Naive thymus-derived CD4-positive, alpha-beta T cell (primary cell): ENCODE measurements at regions of chr16 and their contacts with region 1.

Region 1: DNA sequence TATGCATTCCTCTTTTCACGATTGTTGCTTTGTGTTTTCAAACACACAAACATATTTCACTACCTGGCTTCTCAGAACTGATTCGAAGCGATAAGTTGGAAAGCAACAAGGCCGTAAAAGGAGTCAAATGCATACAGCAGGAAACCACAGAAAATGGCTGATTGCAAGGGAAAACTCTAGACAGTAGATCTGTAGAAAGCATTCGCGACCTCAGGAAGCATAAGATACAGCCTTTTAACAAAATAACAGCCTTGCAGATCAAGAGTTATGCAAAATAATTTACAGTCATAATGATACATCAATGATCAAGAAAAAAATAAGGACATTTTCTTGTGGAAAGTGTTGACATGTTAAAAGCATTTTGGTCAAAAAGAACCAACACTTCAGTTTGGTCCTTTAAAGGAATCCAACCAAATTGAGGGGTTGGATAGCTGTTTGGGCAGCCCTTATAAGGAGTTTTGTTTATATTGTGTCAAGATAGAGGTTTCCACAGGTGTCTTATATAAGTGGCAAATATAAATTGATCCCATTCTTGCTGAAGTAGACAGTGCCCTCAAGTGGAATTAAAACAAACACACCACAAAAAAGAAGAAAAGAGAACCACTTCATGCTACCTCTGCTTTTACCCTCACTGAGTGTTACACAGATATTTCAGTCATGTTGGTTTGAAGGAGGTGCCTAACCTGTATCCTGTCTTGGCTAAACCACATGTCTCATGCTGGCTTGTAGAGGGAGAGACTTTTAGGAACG is 5.5 kb downstream of the CYLD start:
- DNase-seq: peak in 7 of 9 donors; percentile 52 to 80 (median 73)
- ATAC-seq: peak; percentile 87
- H3K4me3 ChIP-seq: peak overlapping the region; percentile 33
- H3K4me3 Mint-ChIP-seq: peak overlapping the region; percentile 74 to 99 (median 94)
- H3K27ac ChIP-seq: peak overlapping the region; percentile 100
- H3K27ac Mint-ChIP-seq: peak overlapping the region; percentile 85 to 98 (median 93)
- H3K4me1 ChIP-seq: peaks cover 30 to 66% of the 10 kb centered on the region in 2 donors
- H3K4me1 Mint-ChIP-seq: peaks cover 34 to 78% (median 69%) of the 10 kb centered on the region in 7 donors
- H3K27me3 ChIP-seq: no peaks in the 10 kb centered on the region
- H3K27me3 Mint-ChIP-seq: no peaks in the 10 kb centered on the region

Region 2: DNA sequence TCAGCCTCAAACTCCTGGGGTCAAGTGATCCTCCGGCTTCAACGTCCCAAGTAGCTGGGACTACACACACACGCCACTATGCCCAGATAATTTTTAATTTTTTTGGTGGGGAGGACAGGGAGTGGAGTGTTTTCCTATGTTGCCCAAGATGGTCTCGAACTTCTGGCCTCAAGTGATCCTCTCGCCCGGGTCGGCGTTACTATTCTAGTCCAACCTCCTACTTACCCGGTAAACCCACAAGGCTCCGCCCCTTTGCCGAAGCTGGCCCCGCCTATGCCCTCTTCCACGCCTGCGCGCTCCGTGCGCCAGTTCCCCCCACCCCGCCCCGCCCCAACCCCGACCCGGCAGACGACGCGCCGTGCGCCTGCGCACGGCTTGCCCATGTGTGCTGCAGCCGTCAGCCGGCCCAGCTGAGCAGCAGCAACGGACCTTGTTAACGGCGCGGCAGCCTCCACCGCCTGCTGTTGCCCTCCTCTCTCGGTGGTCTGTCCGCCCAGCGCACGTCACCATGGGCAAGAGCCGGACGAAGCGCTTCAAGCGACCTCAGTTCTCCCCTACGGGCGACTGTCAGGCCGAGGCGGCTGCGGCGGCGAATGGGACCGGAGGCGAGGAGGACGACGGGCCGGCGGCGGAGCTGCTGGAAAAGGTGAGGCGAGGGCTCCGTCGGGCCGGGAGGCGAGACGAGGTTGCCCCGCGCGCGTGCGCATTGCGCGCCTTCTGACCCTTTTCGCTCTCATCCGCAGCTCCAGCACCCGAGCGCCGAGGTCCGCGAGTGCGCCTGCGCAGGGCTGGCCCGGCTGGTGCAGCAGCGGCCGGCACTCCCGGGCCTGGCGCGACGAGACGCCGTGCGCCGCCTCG is 681.5 kb before region 1 on chr16 and contains the start of gene HEATR3:
- CTCF ChIA-PET with region 1: no interaction called
- POLR2A ChIA-PET with region 1: no interaction called
- intact Hi-C with region 1: loop called in 1 of 2 experiments (anchors 5 kb)
- DNase-seq: peak; percentile 86 to 96 (median 90)
- ATAC-seq: peak; percentile 93
- H3K4me3 ChIP-seq: peak within 1 kb of the TSS; percentile 91
- H3K4me3 Mint-ChIP-seq: peak within 1 kb of the TSS; percentile 80 to 97 (median 92)
- H3K27ac ChIP-seq: peak within 1 kb of the TSS; percentile 81
- H3K27ac Mint-ChIP-seq: peak within 1 kb of the TSS; percentile 55 to 96 (median 93)
- H3K4me1 ChIP-seq: peaks cover 17 to 18% of the 10 kb centered on the region in 2 donors
- H3K4me1 Mint-ChIP-seq: peaks cover 34 to 49% (median 44%) of the 10 kb centered on the region in 7 donors
- H3K27me3 ChIP-seq: no peaks in the 10 kb centered on the region
- H3K27me3 Mint-ChIP-seq: no peaks in the 10 kb centered on the region
- total RNA-seq, gene HEATR3: 12.5 to 27.5 (median 23.5) TPM

Region 3: DNA sequence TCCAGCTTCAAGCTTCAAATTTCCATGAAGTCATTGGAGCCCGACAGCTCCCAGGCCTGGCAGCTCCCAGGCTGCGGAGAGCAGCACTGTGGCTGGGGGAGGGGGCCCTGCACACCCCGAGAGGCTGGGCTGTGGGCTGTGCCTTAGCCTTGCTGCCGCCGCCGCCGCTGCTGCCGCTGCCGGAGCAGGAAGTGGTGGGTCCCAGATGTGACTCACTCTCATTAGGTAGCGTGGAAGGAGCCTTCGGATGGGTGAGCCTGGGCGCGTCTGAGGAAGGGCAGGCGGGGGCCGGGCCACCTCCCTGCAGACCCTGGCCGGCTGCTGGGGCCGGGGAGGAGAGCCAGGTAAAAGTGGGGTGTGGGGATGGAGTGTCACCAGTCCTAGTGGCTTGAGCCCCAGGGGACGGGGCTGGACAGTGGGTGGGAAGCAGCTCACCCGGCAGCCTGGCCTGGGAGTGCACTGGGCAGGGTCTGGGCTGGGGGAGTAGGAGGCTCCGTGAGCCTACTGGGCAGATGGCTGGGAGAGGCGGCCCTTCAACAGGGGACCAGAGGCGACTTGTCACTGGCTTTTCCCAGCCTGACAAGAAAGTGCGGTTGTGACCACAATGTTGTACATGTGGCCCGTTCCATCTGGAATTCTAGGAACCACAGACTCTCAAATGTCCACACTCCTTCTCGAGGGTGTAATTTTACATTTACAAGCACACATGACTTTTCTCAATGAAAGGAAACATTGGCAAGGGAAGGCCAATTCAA is 480.9 kb before region 1 on chr16 and contains the start of gene ADCY7:
- CTCF ChIA-PET with region 1: interaction called, 5 read pairs
- POLR2A ChIA-PET with region 1: interaction called, 3 read pairs
- intact Hi-C with region 1: loop called (anchors 2 to 5 kb)
- DNase-seq: peak; percentile 57 to 84 (median 77)
- ATAC-seq: peak; percentile 90
- H3K4me3 ChIP-seq: peak within 1 kb of the TSS; percentile 87
- H3K4me3 Mint-ChIP-seq: peak within 1 kb of the TSS; percentile 83 to 98 (median 96)
- H3K27ac ChIP-seq: peak within 1 kb of the TSS; percentile 85
- H3K27ac Mint-ChIP-seq: peak within 1 kb of the TSS; percentile 77 to 99 (median 97)
- H3K4me1 ChIP-seq: peaks cover 41 to 46% of the 10 kb centered on the region in 2 donors
- H3K4me1 Mint-ChIP-seq: peaks cover 56 to 76% (median 60%) of the 10 kb centered on the region in 7 donors
- H3K27me3 ChIP-seq: no peaks in the 10 kb centered on the region
- H3K27me3 Mint-ChIP-seq: no peaks in the 10 kb centered on the region
- total RNA-seq, gene ADCY7: 179 to 326 (median 208) TPM

Region 4: GRCh38 chr16:50530277-50531236 is 216.8 kb before region 1 on chr16:
- CTCF ChIA-PET with region 1: no interaction called
- POLR2A ChIA-PET with region 1: no interaction called
- intact Hi-C with region 1: no loop called
- DNase-seq: no peak
- ATAC-seq: no peak
- H3K4me3 ChIP-seq: no peak overlapping the region
- H3K4me3 Mint-ChIP-seq: no peak overlapping the region
- H3K27ac ChIP-seq: no peak overlapping the region
- H3K27ac Mint-ChIP-seq: no peak overlapping the region
- H3K4me1 ChIP-seq: no peaks in the 10 kb centered on the region
- H3K4me1 Mint-ChIP-seq: peaks cover 0 to 3% (median 0%) of the 10 kb centered on the region in 7 donors
- H3K27me3 ChIP-seq: no peaks in the 10 kb centered on the region
- H3K27me3 Mint-ChIP-seq: peaks cover 0 to 18% (median 0%) of the 10 kb centered on the region in 5 donors

Region 5: DNA sequence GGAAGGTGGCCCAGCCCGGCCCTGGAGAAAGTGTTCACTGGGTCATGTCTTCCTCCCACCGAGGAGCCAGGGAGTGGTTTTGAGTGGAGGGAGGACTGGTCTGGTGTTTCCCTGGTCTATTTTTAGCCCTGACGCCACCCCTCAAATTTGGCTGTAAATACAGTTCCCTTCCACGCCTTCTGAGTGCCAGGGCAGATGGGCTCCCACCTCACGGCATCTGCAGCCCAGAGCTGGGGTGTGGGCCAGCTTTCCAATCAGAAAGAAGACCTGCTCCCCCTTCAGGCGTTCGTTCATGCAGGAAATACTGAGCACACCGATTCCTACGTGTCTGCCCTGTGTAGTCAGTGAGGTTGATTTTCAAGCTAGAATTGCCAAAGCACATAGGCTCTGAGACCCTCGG is 120.0 kb before region 1 on chr16:
- CTCF ChIA-PET with region 1: interaction called, 5 read pairs
- POLR2A ChIA-PET with region 1: interaction called, 3 read pairs
- intact Hi-C with region 1: loop called in 1 of 2 experiments (anchors 1 kb)
- DNase-seq: peak in 7 of 9 donors; percentile 29 to 67 (median 57)
- ATAC-seq: peak; percentile 78
- H3K4me3 ChIP-seq: peak overlapping the region; percentile 29
- H3K4me3 Mint-ChIP-seq: peak overlapping the region; percentile 68 to 90 (median 84)
- H3K27ac ChIP-seq: peak overlapping the region; percentile 43
- H3K27ac Mint-ChIP-seq: peak overlapping the region; percentile 71 to 95 (median 88)
- H3K4me1 ChIP-seq: peaks cover 0 to 45% of the 10 kb centered on the region in 2 donors
- H3K4me1 Mint-ChIP-seq: peaks cover 29 to 50% (median 44%) of the 10 kb centered on the region in 7 donors
- H3K27me3 ChIP-seq: no peaks in the 10 kb centered on the region
- H3K27me3 Mint-ChIP-seq: no peaks in the 10 kb centered on the region

Region 6: DNA sequence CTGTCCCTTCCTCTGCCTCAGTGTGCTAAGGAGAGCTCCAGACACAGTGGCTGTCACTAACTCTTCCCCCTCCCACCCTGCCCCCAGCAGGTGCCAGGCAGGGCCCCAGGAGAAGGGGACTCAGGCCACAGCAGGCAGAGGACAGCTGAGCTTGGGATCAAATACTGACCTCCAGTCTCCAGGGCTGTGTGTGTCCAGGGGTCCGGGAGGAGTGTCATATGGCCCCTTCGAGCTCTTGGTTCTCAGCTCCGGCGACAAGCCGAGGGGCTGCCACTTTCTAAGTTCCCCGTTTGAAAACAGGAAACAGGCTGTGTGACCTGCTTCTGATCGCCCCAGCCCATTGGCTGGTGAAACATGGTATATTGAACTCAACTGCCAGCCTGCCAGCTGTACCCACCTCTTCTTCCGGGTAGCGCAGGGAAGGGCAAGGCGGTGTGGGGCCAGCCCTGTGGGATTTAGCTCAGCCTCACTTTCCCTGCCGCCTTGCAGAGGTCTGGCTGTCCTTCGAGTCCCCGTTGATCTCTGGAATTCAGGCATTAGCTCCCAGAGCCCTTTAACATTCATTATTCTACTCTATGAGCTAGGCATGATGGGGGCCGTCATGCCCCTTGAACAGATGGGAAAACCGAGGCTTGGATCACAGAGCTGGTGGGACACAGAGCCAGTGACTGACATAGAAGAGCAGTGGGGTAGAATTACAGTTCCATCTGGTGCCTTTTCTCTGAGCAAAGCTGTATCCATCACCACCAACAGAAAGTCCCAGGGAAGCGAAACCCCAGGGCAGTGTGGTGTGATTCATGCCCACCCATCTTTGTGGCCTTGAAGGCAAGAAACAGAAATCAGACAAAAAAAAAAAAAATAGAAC is 66.1 kb before region 1 on chr16 and contains the start of gene SNX20:
- CTCF ChIA-PET with region 1: interaction called, 55 read pairs
- POLR2A ChIA-PET with region 1: interaction called, 50 read pairs
- intact Hi-C with region 1: loop called (anchors 1 kb)
- DNase-seq: peak in 8 of 9 donors; percentile 40 to 80 (median 75)
- ATAC-seq: peak; percentile 77
- H3K4me3 ChIP-seq: peak within 1 kb of the TSS; percentile 85
- H3K4me3 Mint-ChIP-seq: peak within 1 kb of the TSS; percentile 83 to 98 (median 93)
- H3K27ac ChIP-seq: peak within 1 kb of the TSS; percentile 90
- H3K27ac Mint-ChIP-seq: peak within 1 kb of the TSS; percentile 89 to 99 (median 97)
- H3K4me1 ChIP-seq: peaks cover 80 to 81% of the 10 kb centered on the region in 2 donors
- H3K4me1 Mint-ChIP-seq: peaks cover 68 to 94% (median 89%) of the 10 kb centered on the region in 7 donors
- H3K27me3 ChIP-seq: no peaks in the 10 kb centered on the region
- H3K27me3 Mint-ChIP-seq: no peaks in the 10 kb centered on the region
- total RNA-seq, gene SNX20: 32.4 to 94.9 (median 70.8) TPM

Region 7: DNA sequence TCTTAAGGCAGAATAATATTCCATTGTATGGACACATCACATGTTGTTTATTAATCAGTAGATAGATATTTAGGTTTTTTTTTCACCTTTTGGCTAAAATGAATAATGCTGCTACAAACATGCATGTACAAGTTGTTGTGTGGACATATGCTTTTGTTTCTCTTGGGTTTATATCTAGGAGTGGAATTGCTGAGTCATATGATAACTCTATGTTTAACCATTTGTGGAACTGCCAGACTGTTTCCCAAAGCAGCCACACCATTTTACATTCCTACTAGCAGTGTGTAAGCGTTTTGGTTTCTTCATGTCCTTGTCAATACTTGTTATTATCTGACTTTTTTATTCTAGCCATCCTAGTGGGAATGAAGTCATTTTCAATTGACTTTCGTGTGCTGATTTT is 15.8 kb after region 1 on chr16:
- CTCF ChIA-PET with region 1: interaction called, 10 read pairs
- POLR2A ChIA-PET with region 1: interaction called, 7 read pairs
- intact Hi-C with region 1: loop called in 1 of 2 experiments (anchors 2 kb)
- DNase-seq: no peak
- ATAC-seq: no peak
- H3K4me3 ChIP-seq: no peak overlapping the region
- H3K4me3 Mint-ChIP-seq: peak overlapping the region in 9 of 10 donors; percentile 9 to 75 (median 61)
- H3K27ac ChIP-seq: no peak overlapping the region
- H3K27ac Mint-ChIP-seq: peak overlapping the region in 4 of 9 donors; percentile 38 to 84 (median 48)
- H3K4me1 ChIP-seq: peaks cover 57 to 72% of the 10 kb centered on the region in 2 donors
- H3K4me1 Mint-ChIP-seq: peaks cover 68 to 99% (median 92%) of the 10 kb centered on the region in 7 donors
- H3K27me3 ChIP-seq: no peaks in the 10 kb centered on the region
- H3K27me3 Mint-ChIP-seq: no peaks in the 10 kb centered on the region

Region 8: DNA sequence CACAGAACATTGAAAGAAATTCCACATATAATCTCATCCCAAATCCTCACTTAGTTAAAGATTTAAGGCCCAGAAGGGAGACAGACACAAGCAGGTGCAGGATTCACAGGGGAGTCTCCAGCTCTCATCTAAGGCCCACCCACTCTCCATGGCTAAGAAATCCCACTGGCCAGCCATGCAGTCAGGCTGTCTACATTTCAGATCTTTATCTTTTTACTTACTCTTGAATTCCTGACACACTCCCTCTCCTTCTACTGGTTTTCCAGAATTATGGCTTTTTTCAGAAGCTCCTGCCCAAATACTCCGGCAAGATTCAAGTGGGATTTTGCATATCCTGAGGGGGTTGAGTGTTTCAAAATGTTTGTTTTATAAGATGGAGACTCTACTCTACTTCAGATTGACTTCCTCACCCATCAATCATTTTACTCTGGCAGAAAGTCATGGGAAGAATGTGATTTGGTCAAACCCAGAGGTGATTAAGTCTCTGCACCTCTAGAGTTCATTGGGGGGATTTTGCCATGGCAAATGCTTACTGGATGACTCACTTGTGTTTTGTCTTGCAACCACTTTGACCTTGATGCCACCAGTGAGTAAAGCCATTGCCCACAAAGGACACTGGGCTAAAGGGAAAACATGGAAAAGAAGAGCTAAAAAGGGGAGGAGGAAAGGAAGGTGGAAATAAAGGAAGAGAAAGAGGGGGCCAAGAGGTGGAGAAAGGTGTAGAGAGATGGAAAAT is 1092.5 kb after region 1 on chr16:
- CTCF ChIA-PET with region 1: no interaction called
- POLR2A ChIA-PET with region 1: no interaction called
- intact Hi-C with region 1: no loop called
- DNase-seq: no peak
- ATAC-seq: no peak
- H3K4me3 ChIP-seq: no peak overlapping the region
- H3K4me3 Mint-ChIP-seq: no peak overlapping the region
- H3K27ac ChIP-seq: no peak overlapping the region
- H3K27ac Mint-ChIP-seq: no peak overlapping the region
- H3K4me1 ChIP-seq: no peaks in the 10 kb centered on the region
- H3K4me1 Mint-ChIP-seq: no peaks in the 10 kb centered on the region
- H3K27me3 ChIP-seq: no peaks in the 10 kb centered on the region
- H3K27me3 Mint-ChIP-seq: no peaks in the 10 kb centered on the region